ENCODE measurements at regions of chr1 and their contacts with region 1.

Region 1: DNA sequence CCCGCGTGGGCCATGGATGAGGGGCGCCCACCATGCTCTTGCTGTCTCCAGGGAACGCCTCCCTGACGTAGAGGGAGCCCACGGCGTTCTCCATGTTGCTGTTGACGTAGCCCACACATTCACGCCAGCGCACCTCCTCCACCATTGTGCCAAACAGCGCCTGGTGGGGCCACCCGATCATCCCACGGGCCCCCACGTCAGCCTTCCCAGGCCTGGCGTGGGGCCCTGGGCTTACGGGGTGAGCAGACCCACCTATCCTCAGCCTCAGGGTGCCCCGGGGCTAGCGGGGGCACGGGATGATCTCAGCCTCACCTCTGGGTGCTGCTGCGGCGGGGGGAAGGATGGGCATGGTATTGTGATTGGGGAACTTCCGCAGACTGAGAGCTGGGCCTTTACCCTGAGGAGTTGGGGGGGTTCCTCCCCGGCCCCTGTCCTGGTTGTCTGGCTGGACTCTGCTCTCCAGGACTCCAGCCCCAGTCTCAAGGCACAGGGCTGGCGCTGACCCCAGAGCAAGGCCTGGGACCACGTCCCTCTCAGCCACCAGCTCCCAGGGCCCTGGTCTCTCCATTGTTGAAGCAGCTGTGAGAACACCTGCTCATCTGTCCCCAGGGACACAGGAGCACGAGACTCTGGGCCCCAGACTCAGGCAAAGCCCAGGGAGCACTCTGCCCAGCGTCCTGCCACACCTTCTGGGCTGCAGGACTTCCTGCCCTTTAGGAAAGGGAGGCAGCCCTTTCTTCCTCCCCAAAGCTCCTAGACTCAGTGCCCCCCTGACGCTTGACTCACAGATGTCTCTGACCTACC is 10.2 kb downstream of the PRXL2B start:
- DNase-seq: no peak
- H3K4me3 ChIP-seq: no peak overlapping the region
- H3K4me3 Mint-ChIP-seq: no peak overlapping the region
- H3K27ac ChIP-seq: no peak overlapping the region
- H3K27ac Mint-ChIP-seq: no peak overlapping the region
- H3K4me1 ChIP-seq: no peaks in the 10 kb centered on the region
- H3K4me1 Mint-ChIP-seq: peaks cover 0 to 5% (median 4%) of the 10 kb centered on the region in 4 donors
- H3K27me3 ChIP-seq: no peaks in the 10 kb centered on the region
- H3K27me3 Mint-ChIP-seq: peaks cover 0 to 1% of the 10 kb centered on the region in 2 donors

Region 2: GRCh38 chr1:2610036-2610959 is 13.6 kb after region 1 on chr1:
- CTCF ChIA-PET with region 1: no interaction called
- POLR2A ChIA-PET with region 1: no interaction called
- intact Hi-C with region 1: loop called (anchors 1 kb)
- DNase-seq: no peak
- H3K4me3 ChIP-seq: no peak overlapping the region
- H3K4me3 Mint-ChIP-seq: no peak overlapping the region
- H3K27ac ChIP-seq: no peak overlapping the region
- H3K27ac Mint-ChIP-seq: no peak overlapping the region
- H3K4me1 ChIP-seq: no peaks in the 10 kb centered on the region
- H3K4me1 Mint-ChIP-seq: no peaks in the 10 kb centered on the region
- H3K27me3 ChIP-seq: no peaks in the 10 kb centered on the region
- H3K27me3 Mint-ChIP-seq: peaks cover 4 to 5% of the 10 kb centered on the region in 2 donors

Measured in CD4-positive, alpha-beta memory T cell (primary cell).